ENCODE measurements at regions of chr1 and their contacts with region 1.

Region 1: GRCh38 chr1:28845786-28846543 is 34.0 kb downstream of the OPRD1 start:
- DNase-seq: peak; percentile 25 to 39
- H3K4me3 ChIP-seq: no peak overlapping the region
- H3K27ac ChIP-seq: no peak overlapping the region
- H3K4me1 ChIP-seq: no peaks in the 10 kb centered on the region
- H3K27me3 ChIP-seq: no peaks in the 10 kb centered on the region
- CTCF ChIP-seq: peak; percentile 30; the same call in 1 of the 2 replicates

Region 2: DNA sequence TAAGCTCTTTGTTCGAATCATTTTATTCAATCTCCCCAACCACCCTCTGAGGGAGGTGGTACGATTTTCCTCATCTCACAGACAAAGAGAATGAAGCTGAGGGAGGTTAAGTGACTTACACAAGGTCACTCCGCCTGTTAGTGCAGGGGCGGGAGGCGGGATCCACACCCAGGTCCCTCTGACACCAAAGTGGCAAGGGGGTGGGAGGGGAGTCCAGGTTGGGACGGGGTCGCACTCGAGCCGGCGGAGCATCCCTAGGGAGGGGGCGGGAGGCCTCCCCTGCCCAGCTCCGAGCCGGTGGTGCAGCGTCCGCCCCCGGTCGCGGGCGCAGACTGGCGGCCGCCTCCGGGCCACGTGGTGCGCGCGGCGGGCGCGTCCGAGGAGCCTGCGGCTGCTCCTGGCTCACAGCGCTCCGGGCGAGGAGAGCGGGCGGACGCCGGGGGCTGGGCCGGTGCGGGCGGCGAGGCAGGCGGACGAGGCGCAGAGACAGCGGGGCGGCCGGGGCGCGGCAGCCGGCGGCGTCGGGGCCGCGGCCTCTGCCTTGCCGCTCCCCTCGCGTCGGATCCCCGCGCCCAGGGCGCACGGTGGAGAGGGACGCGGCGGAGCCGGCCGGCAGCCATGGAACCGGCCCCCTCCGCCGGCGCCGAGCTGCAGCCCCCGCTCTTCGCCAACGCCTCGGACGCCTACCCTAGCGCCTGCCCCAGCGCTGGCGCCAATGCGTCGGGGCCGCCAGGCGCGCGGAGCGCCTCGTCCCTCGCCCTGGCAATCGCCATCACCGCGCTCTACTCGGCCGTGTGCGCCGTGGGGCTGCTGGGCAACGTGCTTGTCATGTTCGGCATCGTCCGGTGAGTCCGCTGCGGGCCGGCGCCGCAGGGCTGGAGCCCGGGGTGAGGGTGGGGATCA is 33.9 kb before region 1 on chr1 and contains the start of gene OPRD1:
- CTCF ChIA-PET with region 1: no interaction called
- POLR2A ChIA-PET with region 1: no interaction called
- intact Hi-C with region 1: no loop called
- DNase-seq: no peak
- H3K4me3 ChIP-seq: no peak within 1 kb of the TSS
- H3K27ac ChIP-seq: no peak within 1 kb of the TSS
- H3K4me1 ChIP-seq: no peaks in the 10 kb centered on the region
- H3K27me3 ChIP-seq: peaks cover 18% of the 10 kb centered on the region
- CTCF ChIP-seq: no peak
- total RNA-seq, gene OPRD1: not detected in 2 replicates

Region 3: GRCh38 chr1:28822788-28823187 is 23.2 kb before region 1 on chr1:
- CTCF ChIA-PET with region 1: interaction called, 3 read pairs
- POLR2A ChIA-PET with region 1: interaction called, 30 read pairs
- intact Hi-C with region 1: no loop called
- DNase-seq: no peak
- H3K4me3 ChIP-seq: no peak overlapping the region
- H3K27ac ChIP-seq: no peak overlapping the region
- H3K4me1 ChIP-seq: no peaks in the 10 kb centered on the region
- H3K27me3 ChIP-seq: no peaks in the 10 kb centered on the region
- CTCF ChIP-seq: no peak

Region 4: DNA sequence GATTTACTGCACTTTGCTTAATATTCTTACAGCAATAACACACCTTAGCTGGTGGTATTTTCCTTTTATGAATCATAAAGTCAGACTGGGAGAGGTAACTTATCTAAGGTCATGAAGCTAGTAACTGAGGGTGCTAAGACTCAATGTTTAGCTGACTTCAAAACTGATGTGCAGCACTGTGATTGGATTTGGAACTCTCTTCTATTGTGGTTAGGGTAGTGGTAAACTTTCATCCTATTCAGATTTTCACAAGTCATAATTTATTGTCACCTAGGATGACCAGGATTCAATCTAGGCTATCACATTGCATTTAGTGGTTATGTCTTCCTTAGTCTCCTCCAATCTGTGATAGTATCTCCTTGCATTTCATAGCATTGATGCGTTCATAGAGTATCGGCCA is 87.3 kb after region 1 on chr1:
- CTCF ChIA-PET with region 1: no interaction called
- POLR2A ChIA-PET with region 1: no interaction called
- intact Hi-C with region 1: no loop called
- DNase-seq: no peak
- H3K4me3 ChIP-seq: no peak overlapping the region
- H3K27ac ChIP-seq: no peak overlapping the region
- H3K4me1 ChIP-seq: no peaks in the 10 kb centered on the region; the same call in 1 of the 2 replicates
- H3K27me3 ChIP-seq: no peaks in the 10 kb centered on the region
- CTCF ChIP-seq: no peak

Region 5: GRCh38 chr1:29136391-29136915 is 290.5 kb after region 1 on chr1:
- CTCF ChIA-PET with region 1: no interaction called
- POLR2A ChIA-PET with region 1: no interaction called
- intact Hi-C with region 1: no loop called
- DNase-seq: peak; percentile 42 to 64
- H3K4me3 ChIP-seq: no peak overlapping the region
- H3K27ac ChIP-seq: no peak overlapping the region
- H3K4me1 ChIP-seq: no peaks in the 10 kb centered on the region
- H3K27me3 ChIP-seq: no peaks in the 10 kb centered on the region
- CTCF ChIP-seq: no peak